ENCODE measurements at regions of chrX and their contacts with region 1.

Region 1: GRCh38 chrX:15973299-15973698 is 118.7 kb upstream of the AP1S2 start:
- DNase-seq: peak; percentile 21
- ATAC-seq: peak; percentile 91
- H3K4me3 ChIP-seq: no peak overlapping the region
- H3K27ac ChIP-seq: no peak overlapping the region
- H3K4me1 ChIP-seq: no peaks in the 10 kb centered on the region
- H3K27me3 ChIP-seq: no peaks in the 10 kb centered on the region
- CTCF ChIP-seq: peak; percentile 51 to 79 (median 66)
- POLR2A ChIP-seq: no peak
- RAD21 ChIP-seq: peak; percentile 71

Region 2: GRCh38 chrX:15686818-15687685 is 286.2 kb before region 1 on chrX:
- CTCF ChIA-PET with region 1: no interaction called
- POLR2A ChIA-PET with region 1: no interaction called
- RAD21 ChIA-PET with region 1: no interaction called
- intact Hi-C with region 1: loop called (anchors 5 kb)
- DNase-seq: peak; percentile 8
- ATAC-seq: peak; percentile 77
- H3K4me3 ChIP-seq: no peak overlapping the region
- H3K27ac ChIP-seq: no peak overlapping the region
- H3K4me1 ChIP-seq: no peaks in the 10 kb centered on the region
- H3K27me3 ChIP-seq: no peaks in the 10 kb centered on the region
- CTCF ChIP-seq: peak; percentile 35 to 60 (median 55); a peak in 4 of 6 replicates
- POLR2A ChIP-seq: no peak
- RAD21 ChIP-seq: peak; percentile 63

Region 3: GRCh38 chrX:15864629-15865028 is 108.7 kb before region 1 on chrX:
- CTCF ChIA-PET with region 1: no interaction called
- POLR2A ChIA-PET with region 1: no interaction called
- RAD21 ChIA-PET with region 1: no interaction called
- intact Hi-C with region 1: no loop called
- DNase-seq: no peak
- ATAC-seq: no peak
- H3K4me3 ChIP-seq: no peak overlapping the region
- H3K27ac ChIP-seq: no peak overlapping the region
- H3K4me1 ChIP-seq: no peaks in the 10 kb centered on the region
- H3K27me3 ChIP-seq: no peaks in the 10 kb centered on the region
- CTCF ChIP-seq: no peak
- POLR2A ChIP-seq: no peak
- RAD21 ChIP-seq: no peak